ENCODE measurements at regions of chr12 and their contacts with region 1.

Region 1: GRCh38 chr12:54005853-54006686 is 2.7 kb upstream of the HOXC8 start:
- DNase-seq: no peak
- H3K4me3 ChIP-seq: peak overlapping the region; percentile 27 to 37
- H3K27ac ChIP-seq: no peak overlapping the region
- H3K4me1 ChIP-seq: peaks cover 16% of the 10 kb centered on the region
- H3K27me3 ChIP-seq: peaks cover 19% of the 10 kb centered on the region
- CTCF ChIP-seq: peak; percentile 85 to 95 (median 95)
- POLR2A ChIP-seq: no peak

Region 2: DNA sequence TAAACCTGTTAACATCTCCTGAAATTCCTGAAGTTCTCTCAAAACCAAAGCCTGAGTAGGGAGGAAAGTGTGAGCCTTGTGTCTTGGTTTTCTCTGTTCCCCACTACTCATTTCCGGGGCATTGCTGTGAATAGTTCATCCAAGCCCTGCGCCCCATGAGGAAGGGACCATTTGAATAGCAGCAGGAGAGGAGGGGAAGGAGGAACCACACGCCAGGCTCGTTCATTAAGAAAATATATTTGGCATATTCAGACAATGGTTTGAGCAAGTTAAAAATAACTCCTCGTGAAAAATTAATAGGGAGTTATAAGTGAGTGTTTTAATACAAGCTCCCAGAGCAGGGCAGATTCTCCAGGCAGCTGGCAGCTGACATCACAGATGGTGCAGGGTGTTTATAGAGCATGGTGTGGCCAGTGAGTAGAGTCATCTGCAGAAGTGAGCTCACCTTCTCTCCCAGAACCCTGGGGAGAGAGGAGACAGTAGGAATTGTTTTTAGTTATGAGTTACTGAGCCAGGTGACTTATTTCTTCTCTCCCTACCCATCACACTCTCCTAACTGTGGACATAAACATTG is 224.8 kb before region 1 on chr12:
- intact Hi-C with region 1: no loop called
- DNase-seq: no peak
- H3K4me3 ChIP-seq: no peak overlapping the region
- H3K27ac ChIP-seq: no peak overlapping the region
- H3K4me1 ChIP-seq: no peaks in the 10 kb centered on the region
- H3K27me3 ChIP-seq: no peaks in the 10 kb centered on the region
- CTCF ChIP-seq: no peak
- POLR2A ChIP-seq: no peak

Region 3: DNA sequence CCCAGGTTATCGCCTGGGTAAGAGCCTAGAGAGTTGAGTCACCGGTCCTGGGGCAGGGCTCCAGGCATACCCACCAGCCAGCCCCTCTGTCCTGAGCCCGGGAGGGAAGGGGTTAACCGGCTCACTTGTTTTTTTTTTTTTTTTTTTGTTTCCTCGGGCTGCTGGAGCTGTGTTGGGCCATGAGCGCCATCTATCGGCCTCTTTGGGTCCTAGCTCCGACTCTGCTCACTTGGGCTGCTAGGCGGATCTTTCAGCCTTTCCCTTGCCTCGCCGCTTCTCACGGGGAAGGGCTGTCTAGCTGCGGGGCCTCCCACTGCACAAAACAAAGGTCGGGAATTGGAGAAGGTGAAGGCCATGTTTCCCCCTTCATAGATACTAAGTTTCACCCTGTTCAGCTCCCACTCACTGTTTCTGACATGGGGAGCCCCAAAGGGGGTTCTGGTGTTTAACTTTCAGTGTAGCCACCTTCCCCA is 185.5 kb after region 1 on chr12:
- intact Hi-C with region 1: loop called (anchors 2 kb)
- DNase-seq: no peak
- H3K4me3 ChIP-seq: no peak overlapping the region
- H3K27ac ChIP-seq: no peak overlapping the region
- H3K4me1 ChIP-seq: peaks cover 12% of the 10 kb centered on the region
- H3K27me3 ChIP-seq: no peaks in the 10 kb centered on the region
- CTCF ChIP-seq: peak; percentile 63 to 67 (median 66)
- POLR2A ChIP-seq: no peak

Region 4: GRCh38 chr12:54207484-54208294 is 201.6 kb after region 1 on chr12:
- intact Hi-C with region 1: loop called (anchors 5 kb)
- DNase-seq: no peak
- H3K4me3 ChIP-seq: no peak overlapping the region
- H3K27ac ChIP-seq: no peak overlapping the region
- H3K4me1 ChIP-seq: no peaks in the 10 kb centered on the region
- H3K27me3 ChIP-seq: peaks cover 6% of the 10 kb centered on the region
- CTCF ChIP-seq: peak; percentile 82 to 84 (median 82)
- POLR2A ChIP-seq: no peak

Measured in vagina (tissue), 2 donors.